CD4-positive, alpha-beta T cell (primary cell): ENCODE measurements at regions of chrX and their contacts with region 1.

Region 1: DNA sequence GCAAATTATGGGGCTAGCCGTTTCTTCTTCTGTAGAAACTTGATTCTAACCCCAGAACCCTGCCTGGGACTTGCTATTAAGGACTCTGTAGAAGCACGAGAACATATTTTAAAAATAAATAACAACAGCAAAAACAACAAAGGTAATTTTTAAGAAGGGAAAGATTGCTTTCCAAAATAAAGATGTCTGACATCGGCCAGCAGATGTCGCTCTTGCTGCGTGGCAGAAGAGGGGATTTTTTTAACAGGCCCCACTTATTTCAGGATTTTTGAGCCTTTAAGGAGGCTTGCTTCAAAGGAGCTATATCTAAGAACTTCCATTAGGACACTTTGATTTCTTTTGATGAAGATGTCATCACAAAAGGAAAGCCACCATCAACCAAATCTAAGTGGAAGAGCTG is 62.8 kb upstream of the EGFL6 start:
- DNase-seq: peak; percentile 12 to 73 (median 38)
- ATAC-seq: no peak
- H3K4me3 ChIP-seq: no peak overlapping the region
- H3K4me3 Mint-ChIP-seq: no peak overlapping the region
- H3K27ac ChIP-seq: no peak overlapping the region
- H3K27ac Mint-ChIP-seq: no peak overlapping the region
- H3K4me1 ChIP-seq: no peaks in the 10 kb centered on the region
- H3K4me1 Mint-ChIP-seq: no peaks in the 10 kb centered on the region
- H3K27me3 ChIP-seq: no peaks in the 10 kb centered on the region
- H3K27me3 Mint-ChIP-seq: no peaks in the 10 kb centered on the region
- CTCF ChIP-seq: peak; percentile 76

Region 2: DNA sequence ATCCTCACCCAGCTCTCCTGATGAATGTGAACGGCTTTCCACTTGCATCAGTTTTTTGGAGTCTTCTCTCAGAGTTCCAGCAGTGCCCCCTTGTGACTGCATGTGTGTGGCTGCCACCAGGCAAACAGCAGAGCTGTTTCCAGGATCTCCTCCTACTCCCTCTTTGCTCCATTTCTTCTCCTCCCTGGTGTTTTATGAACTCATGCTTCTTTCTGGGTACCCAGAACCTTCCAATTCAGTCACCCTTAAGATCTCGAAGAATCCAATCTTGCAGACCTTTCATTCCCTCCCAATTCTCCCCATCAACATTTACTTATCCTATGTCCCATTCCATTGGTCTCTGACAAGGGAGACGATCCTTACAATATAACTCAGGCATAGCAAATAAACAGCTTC is 139.6 kb after region 1 on chrX:
- CTCF ChIA-PET with region 1: no interaction called
- POLR2A ChIA-PET with region 1: no interaction called
- intact Hi-C with region 1: loop called in 1 of 2 experiments (anchors 2 kb)
- DNase-seq: peak in 11 of 14 experiments; percentile 2 to 52 (median 19)
- ATAC-seq: no peak
- H3K4me3 ChIP-seq: no peak overlapping the region
- H3K4me3 Mint-ChIP-seq: no peak overlapping the region
- H3K27ac ChIP-seq: no peak overlapping the region
- H3K27ac Mint-ChIP-seq: no peak overlapping the region
- H3K4me1 ChIP-seq: no peaks in the 10 kb centered on the region
- H3K4me1 Mint-ChIP-seq: peaks cover 11% of the 10 kb centered on the region
- H3K27me3 ChIP-seq: no peaks in the 10 kb centered on the region
- H3K27me3 Mint-ChIP-seq: no peaks in the 10 kb centered on the region
- CTCF ChIP-seq: no peak

Region 3: GRCh38 chrX:13750204-13750603 is 243.6 kb after region 1 on chrX:
- CTCF ChIA-PET with region 1: no interaction called
- POLR2A ChIA-PET with region 1: no interaction called
- intact Hi-C with region 1: loop called (anchors 5 kb)
- DNase-seq: peak in 4 of 14 experiments; percentile 15 to 67 (median 60)
- ATAC-seq: peak; percentile 65
- H3K4me3 ChIP-seq: no peak overlapping the region
- H3K4me3 Mint-ChIP-seq: no peak overlapping the region
- H3K27ac ChIP-seq: no peak overlapping the region
- H3K27ac Mint-ChIP-seq: peak overlapping the region; percentile 6
- H3K4me1 ChIP-seq: peaks cover 3% of the 10 kb centered on the region
- H3K4me1 Mint-ChIP-seq: peaks cover 28% of the 10 kb centered on the region
- H3K27me3 ChIP-seq: no peaks in the 10 kb centered on the region
- H3K27me3 Mint-ChIP-seq: no peaks in the 10 kb centered on the region
- CTCF ChIP-seq: peak; percentile 62

Region 4: DNA sequence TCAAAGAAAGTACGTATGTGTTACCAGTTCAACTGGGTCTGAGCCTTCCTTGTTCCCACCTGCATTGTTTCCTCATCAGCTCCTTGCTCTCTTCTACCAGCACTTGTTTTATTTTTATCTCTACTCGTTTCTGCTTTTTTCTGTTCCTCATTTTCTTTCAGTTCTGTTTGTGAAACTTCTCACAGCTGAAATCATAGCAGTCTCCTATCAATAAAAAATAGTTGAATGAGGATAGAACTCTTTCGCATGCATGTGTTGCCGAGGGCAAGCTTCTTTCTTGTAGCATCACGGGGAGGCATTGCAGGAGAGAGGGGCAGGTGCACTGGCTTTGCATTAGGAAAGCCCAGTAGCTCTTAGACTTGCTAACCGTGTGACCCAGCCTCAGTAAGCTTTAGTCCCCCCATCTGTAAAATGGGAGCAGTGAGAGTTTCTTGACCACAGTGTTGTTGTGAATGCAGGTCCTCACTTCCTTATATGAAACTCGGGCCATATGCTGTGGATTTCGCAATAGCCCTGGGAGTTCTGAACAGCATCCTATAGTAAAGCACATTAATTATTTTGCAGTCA is 252.7 kb after region 1 on chrX:
- CTCF ChIA-PET with region 1: no interaction called
- POLR2A ChIA-PET with region 1: no interaction called
- intact Hi-C with region 1: loop called in 1 of 2 experiments (anchors 5 kb)
- DNase-seq: no peak
- ATAC-seq: no peak
- H3K4me3 ChIP-seq: no peak overlapping the region
- H3K4me3 Mint-ChIP-seq: no peak overlapping the region
- H3K27ac ChIP-seq: no peak overlapping the region
- H3K27ac Mint-ChIP-seq: no peak overlapping the region
- H3K4me1 ChIP-seq: no peaks in the 10 kb centered on the region
- H3K4me1 Mint-ChIP-seq: peaks cover 10% of the 10 kb centered on the region
- H3K27me3 ChIP-seq: no peaks in the 10 kb centered on the region
- H3K27me3 Mint-ChIP-seq: no peaks in the 10 kb centered on the region
- CTCF ChIP-seq: no peak

Region 5: GRCh38 chrX:15143050-15143824 is 1636.7 kb after region 1 on chrX:
- CTCF ChIA-PET with region 1: no interaction called
- POLR2A ChIA-PET with region 1: no interaction called
- intact Hi-C with region 1: loop called in 1 of 2 experiments (anchors 10 kb)
- DNase-seq: peak; percentile 16 to 74 (median 49)
- ATAC-seq: peak; percentile 68
- H3K4me3 ChIP-seq: no peak overlapping the region
- H3K4me3 Mint-ChIP-seq: no peak overlapping the region
- H3K27ac ChIP-seq: no peak overlapping the region
- H3K27ac Mint-ChIP-seq: no peak overlapping the region
- H3K4me1 ChIP-seq: peaks cover 6% of the 10 kb centered on the region
- H3K4me1 Mint-ChIP-seq: peaks cover 17% of the 10 kb centered on the region
- H3K27me3 ChIP-seq: no peaks in the 10 kb centered on the region
- H3K27me3 Mint-ChIP-seq: no peaks in the 10 kb centered on the region
- CTCF ChIP-seq: peak; percentile 69